ENCODE measurements at regions of chr13 and their contacts with region 1.

Region 1: DNA sequence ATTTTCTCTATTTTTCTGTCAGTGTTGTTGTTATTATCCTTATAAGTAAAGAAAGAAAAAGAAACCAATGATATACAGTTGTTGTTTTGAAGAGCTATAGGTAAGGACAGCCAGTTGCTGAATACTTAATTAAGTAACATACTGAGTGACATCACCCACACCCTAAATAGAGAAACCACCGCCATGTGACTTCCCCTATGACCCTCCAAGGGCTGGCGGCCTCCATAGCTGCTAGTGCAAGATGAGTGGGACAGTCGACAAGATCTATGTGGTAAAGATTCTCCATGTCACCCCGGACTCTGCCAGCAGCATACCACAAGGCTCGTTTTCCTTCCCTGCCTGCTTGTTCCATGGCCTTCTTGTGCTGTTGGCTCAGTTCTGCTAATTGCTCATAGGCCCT is 221.1 kb downstream of the DNAJC15 start:
- DNase-seq: no peak
- ATAC-seq: no peak
- H3K4me3 ChIP-seq: no peak overlapping the region
- H3K27ac ChIP-seq: no peak overlapping the region
- H3K4me1 ChIP-seq: no peaks in the 10 kb centered on the region
- H3K27me3 ChIP-seq: no peaks in the 10 kb centered on the region
- CTCF ChIP-seq: no peak

Region 2: GRCh38 chr13:43100667-43101066 is 143.8 kb before region 1 on chr13:
- CTCF ChIA-PET with region 1: no interaction called
- POLR2A ChIA-PET with region 1: interaction called, 16 read pairs
- in situ Hi-C with region 1: no loop called
- intact Hi-C with region 1: no loop called
- DNase-seq: no peak
- ATAC-seq: no peak
- H3K4me3 ChIP-seq: no peak overlapping the region
- H3K27ac ChIP-seq: no peak overlapping the region
- H3K4me1 ChIP-seq: no peaks in the 10 kb centered on the region
- H3K27me3 ChIP-seq: no peaks in the 10 kb centered on the region
- CTCF ChIP-seq: no peak

Measured in Panc1 (cell line).